ENCODE measurements at regions of chr7 and their contacts with region 1.

Region 1: DNA sequence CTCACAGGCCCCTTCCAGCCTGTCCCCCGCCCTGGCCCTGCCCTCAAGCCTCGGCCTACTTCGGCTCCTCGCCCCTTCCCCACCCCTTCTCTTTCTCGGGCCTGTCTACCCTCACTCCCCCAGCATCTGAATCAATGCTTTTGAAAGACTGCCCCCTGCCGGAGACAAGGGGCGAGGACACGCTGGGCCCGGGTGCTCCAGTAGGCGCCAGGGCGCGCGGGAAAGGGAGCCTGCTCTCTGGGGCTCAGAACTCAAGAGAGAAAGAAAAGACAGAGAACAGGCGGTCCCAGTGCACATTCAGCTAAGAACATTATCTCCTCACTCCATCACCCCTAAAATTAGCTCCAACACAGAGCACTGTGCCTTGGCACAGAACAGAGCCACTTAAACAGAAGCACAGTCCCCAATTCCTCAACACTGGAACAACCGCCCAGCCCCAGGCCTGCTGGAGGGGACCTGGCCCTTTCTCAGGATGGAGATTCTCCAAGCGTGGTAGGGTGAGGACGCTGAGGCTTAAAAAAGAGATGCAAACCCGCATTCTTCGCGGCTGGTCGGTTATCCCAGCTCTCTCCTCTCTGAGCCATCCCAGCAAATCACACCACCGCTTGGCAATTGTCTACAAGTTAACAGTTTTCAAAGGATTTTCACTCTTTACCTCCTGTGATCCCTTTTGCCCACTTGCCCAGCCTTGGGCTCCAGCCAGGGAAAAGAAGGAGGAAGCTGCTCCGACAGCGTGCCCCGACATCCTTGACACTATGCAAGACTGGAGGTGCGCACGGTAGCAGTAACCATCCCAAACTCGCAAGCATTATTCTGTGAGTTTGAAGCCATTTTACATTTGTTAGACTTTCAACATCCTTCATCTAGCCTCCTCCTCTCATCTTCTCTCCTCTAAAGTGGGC is 2.1 kb downstream of the GIGYF1 start:
- DNase-seq: peak; percentile 67
- ATAC-seq: peak; percentile 63
- H3K4me3 Mint-ChIP-seq: peak overlapping the region; percentile 90
- H3K27ac Mint-ChIP-seq: peak overlapping the region; percentile 80
- H3K4me1 Mint-ChIP-seq: peaks cover 49% of the 10 kb centered on the region
- H3K27me3 Mint-ChIP-seq: no peaks in the 10 kb centered on the region
- CTCF ChIP-seq: peak; percentile 21

Region 2: DNA sequence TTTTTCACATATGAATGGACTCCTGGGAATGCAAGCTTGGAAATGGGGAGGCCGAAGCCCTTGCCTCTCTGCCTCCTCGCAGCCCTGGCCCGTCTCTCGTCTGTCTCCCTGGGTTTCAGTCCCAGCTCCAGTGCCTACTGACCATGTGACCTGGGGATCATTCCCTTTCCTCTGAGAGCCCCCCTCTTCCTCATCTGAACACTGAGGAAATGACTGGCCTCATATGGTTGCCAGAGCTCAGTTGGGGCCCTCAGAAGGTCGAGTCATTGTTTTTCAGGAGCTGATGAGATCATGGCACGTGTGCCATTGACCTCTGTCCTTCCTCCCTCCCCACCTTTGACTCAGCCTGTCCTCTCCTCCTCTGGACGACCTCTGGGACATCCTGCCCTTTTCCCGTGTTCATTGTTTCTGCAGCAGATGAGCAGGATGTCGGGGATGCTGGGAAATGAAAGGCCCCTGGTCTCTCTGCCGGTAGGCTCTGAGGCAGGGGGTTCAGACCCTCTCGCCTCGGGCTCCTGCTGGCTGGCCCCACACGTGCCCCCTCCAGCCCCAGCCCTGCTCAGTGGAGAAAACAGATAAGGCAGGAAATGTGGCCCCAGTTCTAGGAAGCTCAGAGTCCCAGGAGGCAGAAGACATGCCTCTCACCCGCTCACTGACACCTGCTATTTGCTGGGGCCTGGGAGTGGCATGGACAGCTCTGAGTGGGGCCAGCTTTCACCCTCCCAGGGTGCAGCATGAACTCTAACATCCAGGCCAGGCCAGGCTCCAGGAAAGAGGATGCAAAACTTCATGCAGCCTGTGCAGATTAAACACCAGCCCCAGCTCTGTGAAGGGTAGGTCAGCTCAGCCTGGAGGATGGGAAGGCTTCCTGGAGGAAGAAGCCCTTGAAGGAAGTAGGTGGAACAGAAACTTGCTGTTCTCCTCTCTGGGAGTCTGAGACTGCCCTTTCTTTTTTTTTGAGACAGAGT is 247.3 kb before region 1 on chr7:
- CTCF ChIA-PET with region 1: no interaction called
- POLR2A ChIA-PET with region 1: interaction called, 15 read pairs
- intact Hi-C with region 1: no loop called
- DNase-seq: no peak
- ATAC-seq: peak; percentile 60
- H3K4me3 Mint-ChIP-seq: no peak overlapping the region
- H3K27ac Mint-ChIP-seq: peak overlapping the region; percentile 53
- H3K4me1 Mint-ChIP-seq: peaks cover 18% of the 10 kb centered on the region
- H3K27me3 Mint-ChIP-seq: no peaks in the 10 kb centered on the region
- CTCF ChIP-seq: no peak

Region 3: GRCh38 chr7:100545360-100546128 is 146.4 kb before region 1 on chr7:
- CTCF ChIA-PET with region 1: no interaction called
- POLR2A ChIA-PET with region 1: interaction called, 12 read pairs
- intact Hi-C with region 1: no loop called
- DNase-seq: no peak
- ATAC-seq: peak; percentile 59
- H3K4me3 Mint-ChIP-seq: peak overlapping the region; percentile 32
- H3K27ac Mint-ChIP-seq: peak overlapping the region; percentile 80
- H3K4me1 Mint-ChIP-seq: peaks cover 77% of the 10 kb centered on the region
- H3K27me3 Mint-ChIP-seq: no peaks in the 10 kb centered on the region
- CTCF ChIP-seq: no peak

Region 4: GRCh38 chr7:100604028-100604975 is 87.6 kb before region 1 on chr7:
- CTCF ChIA-PET with region 1: interaction called, 3 read pairs
- POLR2A ChIA-PET with region 1: interaction called, 5 read pairs
- intact Hi-C with region 1: loop called (anchors 1 kb)
- DNase-seq: peak; percentile 75
- ATAC-seq: peak; percentile 78
- H3K4me3 Mint-ChIP-seq: peak overlapping the region; percentile 85
- H3K27ac Mint-ChIP-seq: peak overlapping the region; percentile 30
- H3K4me1 Mint-ChIP-seq: peaks cover 19% of the 10 kb centered on the region
- H3K27me3 Mint-ChIP-seq: no peaks in the 10 kb centered on the region
- CTCF ChIP-seq: no peak

Region 5: DNA sequence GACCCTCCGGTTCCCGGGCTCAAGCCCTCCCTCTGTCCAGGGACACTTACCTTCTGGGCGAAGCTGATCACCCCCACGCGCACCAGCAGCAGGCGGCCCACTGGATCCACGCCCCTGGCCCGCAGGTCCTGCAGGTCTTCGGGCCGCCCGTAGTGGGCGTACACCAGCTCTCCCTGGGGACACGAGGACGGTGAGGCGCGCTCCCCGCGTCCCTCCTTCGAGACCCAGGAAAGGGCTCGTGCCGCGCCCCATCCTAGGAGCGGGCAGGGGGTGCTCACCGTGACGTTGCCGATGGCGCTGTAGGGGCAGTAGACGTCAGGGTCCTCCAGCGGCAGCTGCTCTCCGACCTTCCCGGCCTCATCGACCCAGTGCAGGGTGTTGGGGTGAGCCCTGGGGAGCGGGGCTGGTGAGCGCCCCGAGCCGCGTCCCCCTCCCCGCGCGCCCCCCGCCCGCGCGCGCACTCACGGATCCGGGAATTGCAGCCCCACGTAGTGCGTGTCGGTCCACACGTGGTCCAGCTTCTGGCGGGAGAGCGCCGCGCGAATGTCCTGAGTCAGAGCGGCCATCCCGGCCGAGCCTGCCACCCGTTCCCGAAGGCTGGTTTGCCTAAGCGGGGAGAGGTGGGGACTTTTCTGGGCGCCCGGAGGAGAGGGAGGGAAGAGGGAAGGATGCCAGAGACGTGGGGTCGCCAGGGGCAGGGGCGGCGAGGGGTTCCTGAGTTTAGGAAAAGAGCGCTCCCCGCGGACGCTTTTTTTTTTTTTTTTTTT is 58.8 kb before region 1 on chr7:
- CTCF ChIA-PET with region 1: interaction called, 8 read pairs
- POLR2A ChIA-PET with region 1: interaction called, 6 read pairs
- intact Hi-C with region 1: loop called (anchors 1 kb)
- DNase-seq: peak; percentile 63
- ATAC-seq: peak; percentile 71
- H3K4me3 Mint-ChIP-seq: peak overlapping the region; percentile 89
- H3K27ac Mint-ChIP-seq: peak overlapping the region; percentile 78
- H3K4me1 Mint-ChIP-seq: peaks cover 4% of the 10 kb centered on the region
- H3K27me3 Mint-ChIP-seq: no peaks in the 10 kb centered on the region
- CTCF ChIP-seq: no peak

Region 6: DNA sequence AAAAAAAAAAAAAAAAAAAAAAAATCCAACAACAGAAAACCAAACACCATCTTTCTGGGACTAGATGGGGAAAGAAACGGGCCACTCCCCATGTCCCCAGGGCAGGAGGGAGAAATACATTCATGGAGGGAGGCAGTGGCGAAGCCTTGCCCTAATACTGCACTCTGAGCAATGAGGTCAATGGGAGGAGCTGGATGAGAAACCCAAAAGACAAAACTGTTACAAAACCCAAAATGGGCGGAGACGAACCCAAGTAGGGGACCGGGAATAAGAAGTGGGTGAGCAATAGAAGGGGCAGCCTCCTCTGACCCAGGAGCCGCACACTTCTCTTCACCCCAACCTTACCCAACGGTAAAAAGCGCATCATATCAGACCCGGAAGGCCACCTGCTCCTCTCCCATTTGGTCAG is 11.8 kb before region 1 on chr7:
- CTCF ChIA-PET with region 1: interaction called, 7 read pairs
- POLR2A ChIA-PET with region 1: interaction called, 11 read pairs
- intact Hi-C with region 1: loop called (anchors 1 kb)
- DNase-seq: no peak
- ATAC-seq: no peak
- H3K4me3 Mint-ChIP-seq: no peak overlapping the region
- H3K27ac Mint-ChIP-seq: no peak overlapping the region
- H3K4me1 Mint-ChIP-seq: peaks cover 4% of the 10 kb centered on the region
- H3K27me3 Mint-ChIP-seq: no peaks in the 10 kb centered on the region
- CTCF ChIP-seq: no peak

Region 7: DNA sequence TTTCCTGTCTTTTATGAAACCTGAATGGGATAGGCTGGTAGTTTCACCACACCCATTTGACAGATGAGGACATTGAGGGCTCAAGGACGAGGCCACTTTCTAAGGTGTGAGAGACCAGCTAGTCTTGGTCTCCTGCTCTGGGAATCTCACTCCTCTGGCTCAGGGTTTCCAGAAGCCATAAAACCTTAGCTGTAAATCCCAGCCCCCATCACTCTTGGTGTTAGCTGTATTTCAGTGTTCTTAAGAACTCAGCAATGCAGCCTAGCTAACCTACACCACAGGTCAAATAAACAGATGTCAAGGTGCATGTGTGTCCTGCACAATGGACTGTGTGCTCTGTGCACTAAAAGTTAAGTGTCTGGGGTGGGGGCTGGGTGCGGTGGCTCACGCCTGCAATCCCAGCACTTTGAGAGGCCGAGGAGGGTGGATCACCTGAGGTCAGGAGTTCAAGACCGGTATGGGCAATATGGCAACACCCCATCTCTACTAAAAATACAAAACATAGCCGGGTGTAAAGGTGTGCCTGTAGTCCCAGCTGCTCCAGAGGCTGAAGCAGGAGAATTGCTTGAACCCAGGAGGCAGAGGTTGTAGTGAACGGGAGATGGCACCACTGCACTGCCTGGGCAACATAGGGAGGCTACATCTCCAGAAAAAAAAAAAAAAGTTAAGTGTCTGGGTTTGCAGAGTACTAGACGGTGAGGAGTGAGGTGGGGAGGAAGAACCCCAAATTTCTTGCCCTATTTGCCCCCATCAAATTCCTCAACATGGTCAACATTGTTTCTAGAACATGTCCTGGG is 27.8 kb after region 1 on chr7:
- CTCF ChIA-PET with region 1: no interaction called
- POLR2A ChIA-PET with region 1: no interaction called
- intact Hi-C with region 1: no loop called
- DNase-seq: no peak
- ATAC-seq: no peak
- H3K4me3 Mint-ChIP-seq: no peak overlapping the region
- H3K27ac Mint-ChIP-seq: no peak overlapping the region
- H3K4me1 Mint-ChIP-seq: peaks cover 4% of the 10 kb centered on the region
- H3K27me3 Mint-ChIP-seq: peaks cover 38% of the 10 kb centered on the region
- CTCF ChIP-seq: no peak

Region 8: GRCh38 chr7:100825215-100825829 is 133.4 kb after region 1 on chr7:
- CTCF ChIA-PET with region 1: no interaction called
- POLR2A ChIA-PET with region 1: no interaction called
- intact Hi-C with region 1: no loop called
- DNase-seq: no peak
- ATAC-seq: no peak
- H3K4me3 Mint-ChIP-seq: peak overlapping the region; percentile 71
- H3K27ac Mint-ChIP-seq: no peak overlapping the region
- H3K4me1 Mint-ChIP-seq: peaks cover 18% of the 10 kb centered on the region
- H3K27me3 Mint-ChIP-seq: peaks cover 34% of the 10 kb centered on the region
- CTCF ChIP-seq: no peak

Region 9: GRCh38 chr7:102169651-102170392 is 1477.9 kb after region 1 on chr7:
- CTCF ChIA-PET with region 1: no interaction called
- POLR2A ChIA-PET with region 1: no interaction called
- intact Hi-C with region 1: no loop called
- DNase-seq: no peak
- ATAC-seq: no peak
- H3K4me3 Mint-ChIP-seq: no peak overlapping the region
- H3K27ac Mint-ChIP-seq: no peak overlapping the region
- H3K4me1 Mint-ChIP-seq: no peaks in the 10 kb centered on the region
- H3K27me3 Mint-ChIP-seq: no peaks in the 10 kb centered on the region
- CTCF ChIP-seq: no peak